Activated CD4-positive, alpha-beta memory T cell treated with anti-CD3 and anti-CD28 coated beads, Interleukin-2, amount 10 ng/mL, durations not matched to agents 7 days and 5 days (primary cell): ENCODE measurements at regions of chr12 and their contacts with region 1.

Region 1: GRCh38 chr12:50174971-50175715 is 8.0 kb upstream of the CERS5 start:
- DNase-seq: no peak
- H3K4me3 Mint-ChIP-seq: no peak overlapping the region
- H3K27ac Mint-ChIP-seq: no peak overlapping the region
- H3K4me1 Mint-ChIP-seq: peaks cover 2% of the 10 kb centered on the region
- H3K27me3 Mint-ChIP-seq: no peaks in the 10 kb centered on the region

Region 2: GRCh38 chr12:49615725-49616124 is 559.4 kb before region 1 on chr12:
- CTCF ChIA-PET with region 1: no interaction called
- POLR2A ChIA-PET with region 1: no interaction called
- DNase-seq: no peak
- H3K4me3 Mint-ChIP-seq: no peak overlapping the region
- H3K27ac Mint-ChIP-seq: no peak overlapping the region
- H3K4me1 Mint-ChIP-seq: no peaks in the 10 kb centered on the region
- H3K27me3 Mint-ChIP-seq: peaks cover 32% of the 10 kb centered on the region

Region 3: DNA sequence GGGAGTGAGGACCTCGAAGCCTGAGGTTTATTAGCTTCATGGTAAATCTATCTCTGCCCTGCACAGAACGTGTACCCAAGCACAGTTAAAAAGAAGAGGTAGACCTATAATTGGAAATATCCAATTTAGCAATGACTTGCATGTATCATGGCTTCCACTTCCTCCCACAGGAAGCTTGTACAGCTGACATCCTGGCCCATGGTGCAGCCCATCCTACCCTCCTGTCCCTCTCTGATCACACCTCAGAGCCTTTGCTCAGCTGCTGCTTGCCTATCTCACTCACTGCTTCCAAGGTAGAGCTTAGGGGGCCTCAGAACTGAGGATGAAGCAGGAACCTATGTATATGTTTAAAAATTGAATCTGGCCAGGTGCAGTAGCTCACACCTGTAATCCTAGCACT is 328.0 kb before region 1 on chr12:
- CTCF ChIA-PET with region 1: no interaction called
- POLR2A ChIA-PET with region 1: no interaction called
- DNase-seq: peak; percentile 42
- H3K4me3 Mint-ChIP-seq: no peak overlapping the region
- H3K27ac Mint-ChIP-seq: peak overlapping the region; percentile 55
- H3K4me1 Mint-ChIP-seq: peaks cover 33% of the 10 kb centered on the region
- H3K27me3 Mint-ChIP-seq: peaks cover 19% of the 10 kb centered on the region

Region 4: GRCh38 chr12:50084775-50085614 is 90.1 kb before region 1 on chr12 and contains the start of gene SMARCD1:
- CTCF ChIA-PET with region 1: interaction called, 17 read pairs
- POLR2A ChIA-PET with region 1: interaction called, 3 read pairs
- DNase-seq: peak; percentile 83
- H3K4me3 Mint-ChIP-seq: peak within 1 kb of the TSS; percentile 88
- H3K27ac Mint-ChIP-seq: peak within 1 kb of the TSS; percentile 88
- H3K4me1 Mint-ChIP-seq: peaks cover 41% of the 10 kb centered on the region
- H3K27me3 Mint-ChIP-seq: no peaks in the 10 kb centered on the region
- total RNA-seq, gene SMARCD1: 57.3 to 63.3 TPM

Region 5: GRCh38 chr12:50132505-50133135 is 42.5 kb before region 1 on chr12:
- CTCF ChIA-PET with region 1: interaction called, 16 read pairs
- POLR2A ChIA-PET with region 1: no interaction called
- DNase-seq: no peak
- H3K4me3 Mint-ChIP-seq: no peak overlapping the region
- H3K27ac Mint-ChIP-seq: peak overlapping the region; percentile 30
- H3K4me1 Mint-ChIP-seq: peaks cover 7% of the 10 kb centered on the region
- H3K27me3 Mint-ChIP-seq: no peaks in the 10 kb centered on the region

Region 6: GRCh38 chr12:50187084-50187900 is 12.1 kb after region 1 on chr12:
- CTCF ChIA-PET with region 1: interaction called, 20 read pairs
- POLR2A ChIA-PET with region 1: interaction called, 3 read pairs
- DNase-seq: peak; percentile 33
- H3K4me3 Mint-ChIP-seq: no peak overlapping the region
- H3K27ac Mint-ChIP-seq: peak overlapping the region; percentile 82
- H3K4me1 Mint-ChIP-seq: peaks cover 63% of the 10 kb centered on the region
- H3K27me3 Mint-ChIP-seq: no peaks in the 10 kb centered on the region